Posterior vena cava (tissue), 2 donors: ENCODE measurements at regions of chr16 and their contacts with region 1.

Region 1: DNA sequence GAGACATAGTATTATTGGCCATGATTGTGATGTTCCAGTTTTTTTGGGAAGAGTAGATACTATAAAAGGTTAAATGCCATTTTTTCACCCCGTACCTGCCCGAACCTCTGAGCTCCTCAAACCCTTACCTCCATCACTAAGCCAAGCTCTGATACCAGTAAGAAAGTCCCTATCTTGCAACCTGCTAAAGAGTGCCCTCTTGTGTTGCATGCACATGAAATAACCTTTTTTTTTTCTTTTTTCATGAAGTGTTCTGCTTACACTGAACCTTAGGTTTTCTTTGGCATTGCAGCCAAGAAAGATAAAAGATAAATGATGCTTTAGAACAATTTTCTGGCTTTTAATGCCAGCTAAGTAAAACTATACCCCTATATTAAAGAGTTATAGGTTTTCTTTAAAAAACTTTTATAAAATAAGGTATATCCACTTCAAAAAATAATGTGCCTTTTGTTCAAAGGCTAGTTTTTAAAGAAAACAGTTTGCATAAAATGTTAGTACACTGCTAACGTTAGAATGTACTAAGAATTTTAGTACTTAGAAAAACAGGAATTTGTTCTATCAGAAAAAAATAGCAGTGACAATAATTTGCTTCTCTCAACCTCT is 295.3 kb upstream of the PMFBP1 start:
- DNase-seq: no peak

Region 2: DNA sequence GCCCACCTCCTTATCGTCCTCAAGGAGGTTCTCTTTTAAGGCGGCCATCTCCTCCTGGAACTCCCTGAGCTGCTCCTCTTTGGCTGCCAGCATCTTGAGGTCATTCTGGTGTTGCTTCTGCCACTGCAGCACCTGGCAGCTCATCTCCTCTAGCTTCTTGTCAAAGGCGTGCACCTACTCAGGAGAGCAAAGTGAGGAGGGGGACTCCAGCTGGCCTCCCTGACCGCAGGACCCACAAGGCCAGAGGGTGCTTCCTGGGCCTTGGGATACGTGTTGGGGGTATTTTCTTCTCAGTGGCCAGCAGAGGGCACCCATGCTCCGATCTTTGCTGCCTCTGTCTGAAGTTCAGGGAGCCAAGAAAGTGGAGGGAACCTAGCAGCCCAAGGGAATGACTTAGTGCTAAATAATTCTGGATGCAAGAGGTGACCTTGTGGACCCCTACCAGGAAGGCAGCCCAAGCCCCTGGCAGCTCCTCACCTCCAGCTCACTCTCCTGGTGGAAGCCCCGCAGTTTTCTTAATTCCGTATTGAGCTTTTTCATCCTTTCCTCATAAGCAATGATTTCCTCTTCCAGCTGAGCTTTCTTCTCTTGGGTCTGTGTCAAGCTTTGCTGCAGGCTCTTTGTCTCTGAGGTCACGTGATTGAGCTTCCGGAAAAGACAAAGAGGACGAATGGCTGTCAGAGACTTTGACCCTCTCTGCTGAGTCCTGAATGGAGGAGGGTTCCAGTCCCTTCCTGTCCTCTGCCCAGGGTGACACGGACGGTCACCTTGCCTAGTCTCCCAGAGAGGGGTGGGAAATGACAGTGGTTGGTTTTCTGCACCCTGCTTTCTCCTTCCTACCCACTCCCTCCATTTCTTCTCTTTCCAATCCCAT is 342.3 kb before region 1 on chr16:
- intact Hi-C with region 1: loop called in 1 of 2 experiments (anchors 10 kb)
- DNase-seq: peak; percentile 92

Region 3: DNA sequence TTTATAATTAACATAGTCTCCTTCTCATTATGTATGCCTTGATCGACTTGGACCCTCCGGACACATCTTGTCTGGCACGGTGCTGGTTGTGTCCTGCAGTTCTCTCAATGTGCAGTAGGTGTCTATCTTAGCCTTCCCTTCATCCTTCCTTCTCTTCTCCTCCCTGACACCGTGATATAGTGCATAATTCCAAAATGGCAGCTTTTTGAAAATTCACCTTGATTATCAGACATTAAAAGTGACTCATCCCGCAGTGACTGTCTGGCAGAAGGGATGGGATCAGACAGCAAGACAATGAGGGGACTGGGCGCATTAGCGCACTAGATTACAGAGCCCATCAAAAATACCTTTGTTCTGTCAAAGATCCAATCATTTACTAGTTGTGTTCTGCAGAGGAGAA is 225.3 kb before region 1 on chr16:
- intact Hi-C with region 1: loop called in 1 of 2 experiments (anchors 5 kb)
- DNase-seq: no peak

Region 4: GRCh38 chr16:72568502-72568901 is 101.2 kb after region 1 on chr16:
- intact Hi-C with region 1: no loop called
- DNase-seq: no peak